ENCODE measurements at regions of chr7 and their contacts with region 1.

Region 1: DNA sequence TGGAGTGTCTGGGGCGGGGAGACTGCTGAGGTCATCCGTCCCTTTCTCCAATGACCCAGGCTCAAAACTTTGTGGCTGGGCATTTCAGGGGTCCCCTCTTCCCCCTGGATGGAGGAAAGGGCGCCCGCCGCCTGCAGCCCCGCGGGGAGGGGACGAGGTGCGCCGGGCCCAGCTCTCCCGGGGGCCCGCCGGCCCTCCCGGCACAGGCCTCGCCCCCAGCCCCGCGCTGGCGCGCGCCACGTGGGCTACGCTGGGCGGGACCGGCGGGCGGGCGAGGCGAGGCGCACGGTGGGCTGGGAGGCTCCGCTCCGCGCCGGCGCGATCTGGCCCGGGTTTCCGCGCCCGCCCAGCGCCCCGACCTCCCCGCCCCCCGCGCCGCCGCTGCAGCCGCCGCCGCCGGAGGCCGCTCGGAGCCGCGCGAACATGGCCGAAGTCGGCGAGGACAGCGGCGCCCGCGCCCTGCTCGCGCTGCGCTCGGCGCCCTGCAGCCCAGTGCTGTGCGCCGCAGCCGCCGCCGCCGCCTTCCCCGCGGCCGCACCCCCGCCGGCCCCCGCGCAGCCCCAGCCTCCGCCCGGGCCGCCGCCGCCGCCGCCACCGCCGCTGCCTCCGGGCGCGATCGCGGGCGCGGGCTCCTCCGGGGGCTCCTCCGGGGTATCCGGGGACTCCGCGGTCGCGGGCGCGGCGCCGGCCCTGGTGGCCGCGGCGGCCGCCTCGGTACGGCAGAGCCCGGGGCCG is at the start of gene FOXK1:
- DNase-seq: peak; percentile 56 to 89 (median 77)
- ATAC-seq: peak; percentile 81
- H3K4me3 ChIP-seq: peak within 1 kb of the TSS; percentile 70 to 78
- H3K4me3 Mint-ChIP-seq: peak within 1 kb of the TSS; percentile 97
- H3K27ac ChIP-seq: peak within 1 kb of the TSS; percentile 57 to 86
- H3K27ac Mint-ChIP-seq: peak within 1 kb of the TSS; percentile 100
- H3K4me1 ChIP-seq: peaks cover 25% of the 10 kb centered on the region
- H3K4me1 Mint-ChIP-seq: peaks cover 33% of the 10 kb centered on the region
- H3K27me3 ChIP-seq: no peaks in the 10 kb centered on the region
- H3K27me3 Mint-ChIP-seq: peaks cover 3% of the 10 kb centered on the region
- CTCF ChIP-seq: no peak
- total RNA-seq, gene FOXK1: 65.8 to 69.8 TPM

Region 2: GRCh38 chr7:3300651-3301378 is 1381.2 kb before region 1 on chr7 and contains the start of gene SDK1:
- CTCF ChIA-PET with region 1: no interaction called
- POLR2A ChIA-PET with region 1: no interaction called
- intact Hi-C with region 1: loop called in 1 of 2 experiments (anchors 5 kb)
- DNase-seq: peak; percentile 80 to 96 (median 90)
- ATAC-seq: peak; percentile 82
- H3K4me3 ChIP-seq: peak within 1 kb of the TSS; percentile 33 to 54
- H3K4me3 Mint-ChIP-seq: peak within 1 kb of the TSS; percentile 86
- H3K27ac ChIP-seq: no peak within 1 kb of the TSS
- H3K27ac Mint-ChIP-seq: no peak within 1 kb of the TSS
- H3K4me1 ChIP-seq: peaks cover 17% of the 10 kb centered on the region
- H3K4me1 Mint-ChIP-seq: peaks cover 15% of the 10 kb centered on the region
- H3K27me3 ChIP-seq: peaks cover 3 to 4% of the 10 kb centered on the region in 2 experiments
- H3K27me3 Mint-ChIP-seq: peaks cover 16% of the 10 kb centered on the region
- CTCF ChIP-seq: peak; percentile 79
- total RNA-seq, gene SDK1: 0.24 to 0.36 TPM

Region 3: GRCh38 chr7:4216016-4216415 is 466.0 kb before region 1 on chr7:
- CTCF ChIA-PET with region 1: no interaction called
- POLR2A ChIA-PET with region 1: no interaction called
- intact Hi-C with region 1: no loop called
- DNase-seq: no peak
- ATAC-seq: no peak
- H3K4me3 ChIP-seq: no peak overlapping the region
- H3K4me3 Mint-ChIP-seq: no peak overlapping the region
- H3K27ac ChIP-seq: no peak overlapping the region
- H3K27ac Mint-ChIP-seq: no peak overlapping the region
- H3K4me1 ChIP-seq: no peaks in the 10 kb centered on the region
- H3K4me1 Mint-ChIP-seq: no peaks in the 10 kb centered on the region
- H3K27me3 ChIP-seq: no peaks in the 10 kb centered on the region
- H3K27me3 Mint-ChIP-seq: no peaks in the 10 kb centered on the region
- CTCF ChIP-seq: no peak

Region 4: DNA sequence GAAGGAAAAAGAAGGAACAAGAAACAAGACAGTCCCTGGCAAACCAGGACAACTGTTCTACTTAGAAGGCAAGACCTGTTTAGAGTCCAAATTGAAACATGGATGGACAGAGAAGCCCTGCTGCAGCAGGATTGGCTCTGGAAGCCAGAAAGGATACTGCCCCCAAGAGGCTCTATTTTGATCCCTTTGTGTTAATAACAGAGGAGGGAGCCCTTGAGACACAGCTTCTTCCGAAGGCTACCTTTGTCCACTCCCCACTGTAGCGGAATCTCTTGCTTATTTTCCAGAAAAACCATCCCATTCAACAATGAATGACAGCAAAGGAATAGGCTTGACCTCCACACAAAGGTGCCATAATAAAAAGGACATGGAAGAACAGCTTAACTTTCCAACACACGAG is 120.3 kb before region 1 on chr7:
- CTCF ChIA-PET with region 1: no interaction called
- POLR2A ChIA-PET with region 1: no interaction called
- intact Hi-C with region 1: no loop called
- DNase-seq: no peak
- ATAC-seq: no peak
- H3K4me3 ChIP-seq: no peak overlapping the region
- H3K4me3 Mint-ChIP-seq: no peak overlapping the region
- H3K27ac ChIP-seq: no peak overlapping the region
- H3K27ac Mint-ChIP-seq: no peak overlapping the region
- H3K4me1 ChIP-seq: no peaks in the 10 kb centered on the region
- H3K4me1 Mint-ChIP-seq: no peaks in the 10 kb centered on the region
- H3K27me3 ChIP-seq: no peaks in the 10 kb centered on the region
- H3K27me3 Mint-ChIP-seq: peaks cover 34% of the 10 kb centered on the region
- CTCF ChIP-seq: no peak

Region 5: GRCh38 chr7:4641667-4642467 is 40.2 kb before region 1 on chr7:
- CTCF ChIA-PET with region 1: interaction called, 11 read pairs
- POLR2A ChIA-PET with region 1: interaction called, 91 read pairs
- intact Hi-C with region 1: loop called (anchors 1 kb)
- DNase-seq: peak; percentile 93 to 98 (median 96)
- ATAC-seq: peak; percentile 86
- H3K4me3 ChIP-seq: peak overlapping the region; percentile 74 to 75
- H3K4me3 Mint-ChIP-seq: peak overlapping the region; percentile 89
- H3K27ac ChIP-seq: peak overlapping the region; percentile 83 to 88
- H3K27ac Mint-ChIP-seq: peak overlapping the region; percentile 96
- H3K4me1 ChIP-seq: peaks cover 8% of the 10 kb centered on the region
- H3K4me1 Mint-ChIP-seq: peaks cover 8% of the 10 kb centered on the region
- H3K27me3 ChIP-seq: no peaks in the 10 kb centered on the region
- H3K27me3 Mint-ChIP-seq: no peaks in the 10 kb centered on the region
- CTCF ChIP-seq: no peak

Region 6: GRCh38 chr7:4744391-4745264 is 62.6 kb after region 1 on chr7:
- CTCF ChIA-PET with region 1: interaction called, 4 read pairs
- POLR2A ChIA-PET with region 1: interaction called, 9 read pairs
- intact Hi-C with region 1: loop called (anchors 2 kb)
- DNase-seq: peak; percentile 38 to 88 (median 72)
- ATAC-seq: peak; percentile 68
- H3K4me3 ChIP-seq: peak overlapping the region; percentile 50 to 64
- H3K4me3 Mint-ChIP-seq: peak overlapping the region; percentile 79
- H3K27ac ChIP-seq: peak overlapping the region; percentile 81 to 84
- H3K27ac Mint-ChIP-seq: peak overlapping the region; percentile 93
- H3K4me1 ChIP-seq: peaks cover 65% of the 10 kb centered on the region
- H3K4me1 Mint-ChIP-seq: peaks cover 67% of the 10 kb centered on the region
- H3K27me3 ChIP-seq: no peaks in the 10 kb centered on the region
- H3K27me3 Mint-ChIP-seq: no peaks in the 10 kb centered on the region
- CTCF ChIP-seq: no peak

Region 7: DNA sequence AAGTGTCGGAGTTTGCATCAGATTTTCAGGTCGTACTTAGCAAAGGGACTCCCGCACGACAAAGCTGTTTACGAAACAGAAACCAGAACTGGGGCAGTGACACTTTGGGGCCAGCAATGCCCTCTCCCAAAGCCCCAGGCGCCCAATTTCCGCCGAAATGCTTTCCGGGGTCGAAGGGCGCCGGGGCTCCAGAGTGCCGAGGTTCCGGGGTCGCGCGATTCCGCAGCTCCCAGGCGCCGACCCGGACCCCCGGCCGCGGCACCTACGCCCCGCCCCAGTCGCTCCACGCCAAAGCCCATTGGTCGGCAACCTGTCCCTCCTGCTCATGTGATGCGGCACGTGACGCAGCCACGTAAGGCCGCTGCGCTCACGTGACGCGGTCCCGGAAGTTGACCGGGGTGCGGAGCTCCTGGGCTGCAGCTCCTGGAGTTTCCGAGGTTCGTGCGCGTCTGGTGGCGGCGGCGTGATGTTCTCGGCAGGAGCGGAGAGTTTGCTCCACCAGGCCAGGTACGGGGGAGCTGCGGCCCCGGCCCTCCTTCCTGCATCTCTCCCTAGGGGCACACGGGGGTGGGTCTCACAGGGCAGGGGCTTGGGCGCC is 93.3 kb after region 1 on chr7 and contains the start of gene AP5Z1:
- CTCF ChIA-PET with region 1: interaction called, 3 read pairs
- POLR2A ChIA-PET with region 1: interaction called, 12 read pairs
- intact Hi-C with region 1: loop called (anchors 1 kb)
- DNase-seq: peak; percentile 90 to 99 (median 95)
- ATAC-seq: peak; percentile 93
- H3K4me3 ChIP-seq: peak within 1 kb of the TSS; percentile 80 to 98
- H3K4me3 Mint-ChIP-seq: peak within 1 kb of the TSS; percentile 99
- H3K27ac ChIP-seq: peak within 1 kb of the TSS; percentile 93 to 94
- H3K27ac Mint-ChIP-seq: peak within 1 kb of the TSS; percentile 99
- H3K4me1 ChIP-seq: peaks cover 25% of the 10 kb centered on the region
- H3K4me1 Mint-ChIP-seq: peaks cover 47% of the 10 kb centered on the region
- H3K27me3 ChIP-seq: no peaks in the 10 kb centered on the region
- H3K27me3 Mint-ChIP-seq: no peaks in the 10 kb centered on the region
- CTCF ChIP-seq: no peak
- total RNA-seq, gene AP5Z1: 129 to 131 TPM

Measured in CD8-positive, alpha-beta T cell (primary cell).